A549 (cell line): ENCODE measurements at regions of chr3 and their contacts with region 1.

Region 1: DNA sequence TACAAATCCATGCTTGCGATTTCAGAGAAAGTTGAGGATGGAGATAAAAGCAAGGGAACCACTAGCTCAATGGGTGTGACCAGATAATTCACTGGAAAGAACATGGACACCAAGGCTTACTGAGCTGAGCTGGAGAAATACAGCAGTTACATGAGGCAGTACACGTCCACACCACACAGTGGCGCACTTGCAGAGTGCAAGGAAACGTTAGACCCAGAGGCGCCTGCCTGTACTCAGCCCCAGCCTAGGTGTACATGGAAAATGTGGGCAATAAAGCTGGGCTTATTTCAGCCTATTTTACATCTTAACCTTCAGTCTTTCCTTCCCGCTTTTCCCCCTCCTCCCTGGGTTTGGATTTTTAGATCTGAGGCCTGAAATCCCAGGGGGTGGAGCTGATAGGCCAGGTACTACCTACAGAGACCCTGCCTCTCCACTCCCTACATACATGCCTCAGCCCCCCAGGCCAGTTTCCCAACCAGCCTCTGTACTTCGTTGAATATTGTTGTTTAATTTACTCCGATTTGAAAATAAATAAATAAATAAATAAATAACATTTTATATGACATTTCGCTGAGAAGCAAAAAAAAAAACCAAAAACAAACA is 60.1 kb downstream of the PCOLCE2 start:
- DNase-seq: peak; percentile 72 to 84
- ATAC-seq: peak; percentile 99 to 100
- H3K4me3 ChIP-seq: no peak overlapping the region
- H3K27ac ChIP-seq: 0 out of 6 replicates have a peak overlapping the region, but pooled peaks of 1 of the 2 experiments have one; percentile 47
- H3K4me1 ChIP-seq: 0 out of 3 replicates have a peak, but pooled peaks cover 3% of the 10 kb centered on the region
- CTCF ChIP-seq: peak; percentile 92
- EP300 ChIP-seq: no peak
- POLR2A ChIP-seq: no peak
- RAD21 ChIP-seq: peak; percentile 93 to 95

Region 2: DNA sequence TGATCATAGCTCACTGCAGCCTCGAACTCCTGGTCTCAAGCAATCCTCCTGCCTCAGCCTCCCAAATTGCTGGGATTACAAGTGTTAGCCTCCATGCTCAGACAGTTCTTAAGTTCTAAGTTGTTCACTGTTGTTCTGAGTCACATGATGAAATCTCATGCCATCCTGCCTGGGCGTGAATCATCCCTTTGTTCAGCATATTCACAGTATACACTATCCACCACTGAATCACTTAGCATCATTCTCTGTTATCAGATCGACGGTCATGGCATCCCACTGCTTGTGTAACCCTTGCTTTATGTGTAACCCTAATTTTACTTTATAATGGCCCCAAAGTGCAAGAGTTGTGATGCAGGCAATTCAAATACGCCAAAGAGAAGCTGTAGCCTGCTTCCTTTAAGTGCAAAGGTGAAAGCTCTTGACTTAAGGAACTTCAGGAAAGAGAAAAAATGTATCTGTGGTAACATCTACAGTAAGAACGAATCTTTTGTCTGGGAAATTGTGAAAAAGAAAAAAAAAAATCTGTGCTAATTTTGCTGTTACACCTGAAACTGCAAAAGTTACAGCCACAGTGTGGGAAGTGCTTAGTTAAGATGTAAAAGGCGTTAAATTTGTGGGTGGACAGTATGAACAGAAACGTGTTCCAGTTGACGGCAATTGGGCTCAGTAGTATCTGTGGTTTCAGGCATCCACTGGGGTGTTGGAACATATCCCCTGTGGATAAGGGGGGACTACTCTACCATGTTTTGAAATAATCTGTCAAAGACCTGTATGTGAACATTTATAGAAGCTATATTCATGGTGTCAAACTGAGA is 20.5 kb before region 1 on chr3:
- CTCF ChIA-PET with region 1: interaction called, 40 read pairs
- POLR2A ChIA-PET with region 1: no interaction called
- DNase-seq: peak; percentile 32 to 68
- ATAC-seq: peak; percentile 93 to 98
- H3K4me3 ChIP-seq: no peak overlapping the region
- H3K27ac ChIP-seq: peak overlapping the region; percentile 58 to 81; a peak in 5 of 6 replicates
- H3K4me1 ChIP-seq: peaks cover 13% of the 10 kb centered on the region; the same call in 2 of the 3 replicates
- CTCF ChIP-seq: no peak
- EP300 ChIP-seq: peak in 1 of 2 experiments; percentile 36; a peak in 1 of 5 replicates
- POLR2A ChIP-seq: no peak
- RAD21 ChIP-seq: no peak

Region 3: DNA sequence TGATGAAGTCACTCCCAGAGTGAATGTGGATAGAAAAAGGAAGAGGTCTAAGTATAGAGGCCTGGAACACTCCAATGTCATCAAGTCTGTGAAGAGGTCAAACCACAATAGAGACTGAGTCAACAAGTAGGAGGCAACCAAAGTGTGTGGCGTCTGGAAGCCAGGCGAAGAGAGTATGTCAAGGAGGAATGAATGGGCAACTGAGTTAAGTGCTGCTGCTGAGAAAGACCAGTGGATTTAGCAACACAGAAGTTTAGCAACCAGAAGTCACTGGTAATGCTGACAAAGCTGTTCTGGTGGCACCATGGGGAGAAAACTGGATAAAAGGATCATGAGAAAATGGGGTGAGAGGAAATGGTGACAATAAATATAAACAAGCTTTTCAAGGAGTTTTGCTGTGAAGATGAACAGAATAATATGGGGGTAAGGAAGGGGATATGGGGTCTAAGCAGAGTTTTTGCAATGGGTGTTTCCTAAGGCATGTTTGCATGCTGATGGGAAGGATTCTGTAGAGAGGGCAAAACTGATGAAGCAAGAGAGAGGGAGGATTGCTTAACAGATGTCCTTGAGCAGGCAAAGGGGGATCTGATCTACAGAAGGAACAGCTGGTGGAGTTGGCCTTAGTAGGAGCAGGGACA is 21.7 kb after region 1 on chr3:
- CTCF ChIA-PET with region 1: interaction called, 89 read pairs
- POLR2A ChIA-PET with region 1: no interaction called
- DNase-seq: peak; percentile 17 to 80
- ATAC-seq: peak; percentile 74 to 85
- H3K4me3 ChIP-seq: no peak overlapping the region
- H3K27ac ChIP-seq: peak overlapping the region; percentile 19 to 79; a peak in 4 of 6 replicates
- H3K4me1 ChIP-seq: peaks cover 47% of the 10 kb centered on the region
- CTCF ChIP-seq: no peak
- EP300 ChIP-seq: peak in 1 of 2 experiments; percentile 42; a peak in 1 of 5 replicates
- POLR2A ChIP-seq: no peak
- RAD21 ChIP-seq: no peak

Region 4: DNA sequence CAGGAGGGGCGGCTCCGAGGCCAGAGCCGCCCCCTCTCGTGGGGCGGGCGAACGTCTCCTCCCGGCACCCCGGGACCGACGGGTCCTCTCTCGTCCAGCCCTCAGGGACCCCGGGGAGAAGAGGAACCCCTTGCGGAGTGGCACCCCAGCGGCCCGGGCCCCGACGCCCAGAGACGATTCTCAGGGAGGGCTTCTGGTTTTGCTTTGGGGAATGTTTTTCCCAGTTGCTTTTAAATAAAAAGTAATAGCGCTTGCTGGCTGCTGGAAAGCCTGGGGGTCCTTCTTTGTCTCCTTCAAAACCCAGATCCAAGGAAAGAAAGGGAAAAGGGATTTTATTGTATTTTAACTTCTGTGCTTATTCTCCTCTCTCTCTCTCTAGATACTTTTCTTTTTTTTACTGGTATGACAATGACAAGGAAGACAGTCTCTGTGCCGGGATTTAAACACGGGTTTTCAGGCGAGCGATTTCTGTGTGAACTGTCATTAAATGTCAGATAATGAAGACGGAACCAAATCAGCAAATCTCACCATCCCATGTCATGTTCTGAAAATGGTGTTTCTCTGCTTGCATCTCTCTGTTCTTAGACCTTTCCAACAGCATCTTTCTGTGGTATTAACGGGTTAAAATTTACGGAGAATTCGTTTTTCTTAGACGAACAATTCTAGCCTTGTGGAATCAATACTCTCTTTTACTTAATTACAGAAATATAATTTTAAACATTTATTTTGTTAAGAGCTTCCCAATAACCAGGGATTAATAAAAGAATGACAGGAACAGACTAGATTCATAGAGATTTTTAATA is 60.6 kb after region 1 on chr3:
- CTCF ChIA-PET with region 1: interaction called, 26 read pairs
- POLR2A ChIA-PET with region 1: interaction called, 8 read pairs
- DNase-seq: no peak
- ATAC-seq: no peak
- H3K4me3 ChIP-seq: peak overlapping the region; percentile 75
- H3K27ac ChIP-seq: peak overlapping the region; percentile 83 to 89
- H3K4me1 ChIP-seq: peaks cover 15% of the 10 kb centered on the region
- CTCF ChIP-seq: no peak
- EP300 ChIP-seq: no peak
- POLR2A ChIP-seq: no peak
- RAD21 ChIP-seq: no peak

Region 5: DNA sequence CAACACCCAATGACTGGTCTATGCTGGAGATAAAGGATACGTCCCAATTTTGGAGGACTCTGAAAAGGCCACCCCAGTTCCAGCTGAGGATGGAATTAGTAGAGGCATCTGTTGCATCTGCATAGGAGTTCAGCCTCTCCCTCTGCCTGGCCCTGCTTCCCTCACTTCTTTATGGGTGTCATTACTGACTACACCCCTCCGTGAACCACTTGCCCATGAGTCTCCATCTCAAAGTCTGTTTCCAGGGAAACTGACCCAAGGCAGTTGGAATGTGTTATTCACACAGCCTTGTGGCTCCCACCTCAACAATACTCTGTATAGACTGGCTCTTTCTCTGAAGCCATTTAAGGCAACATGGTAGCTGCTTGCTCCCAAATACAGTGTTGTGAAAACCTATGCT is 81.5 kb after region 1 on chr3:
- CTCF ChIA-PET with region 1: interaction called, 31 read pairs
- POLR2A ChIA-PET with region 1: no interaction called
- DNase-seq: no peak
- ATAC-seq: no peak
- H3K4me3 ChIP-seq: no peak overlapping the region
- H3K27ac ChIP-seq: no peak overlapping the region
- H3K4me1 ChIP-seq: peaks cover under 1% of the 10 kb centered on the region; the same call in 1 of the 3 replicates
- CTCF ChIP-seq: no peak
- EP300 ChIP-seq: no peak
- POLR2A ChIP-seq: no peak
- RAD21 ChIP-seq: no peak

Region 6: GRCh38 chr3:142965581-142965980 is 136.8 kb after region 1 on chr3:
- CTCF ChIA-PET with region 1: interaction called, 12 read pairs
- POLR2A ChIA-PET with region 1: interaction called, 3 read pairs
- DNase-seq: no peak
- ATAC-seq: no peak
- H3K4me3 ChIP-seq: no peak overlapping the region
- H3K27ac ChIP-seq: no peak overlapping the region
- H3K4me1 ChIP-seq: peaks cover 22% of the 10 kb centered on the region
- CTCF ChIP-seq: no peak
- EP300 ChIP-seq: no peak
- POLR2A ChIP-seq: no peak
- RAD21 ChIP-seq: no peak

Region 7: GRCh38 chr3:143001369-143002082 is 172.7 kb after region 1 on chr3 and contains the start of gene U2SURP:
- CTCF ChIA-PET with region 1: interaction called, 264 read pairs
- POLR2A ChIA-PET with region 1: interaction called, 6 read pairs
- DNase-seq: peak; percentile 93 to 98
- ATAC-seq: peak; percentile 89 to 92
- H3K4me3 ChIP-seq: peak within 1 kb of the TSS; percentile 93
- H3K27ac ChIP-seq: peak within 1 kb of the TSS; percentile 91 to 96
- H3K4me1 ChIP-seq: peaks cover 44% of the 10 kb centered on the region
- CTCF ChIP-seq: no peak
- EP300 ChIP-seq: no peak; a peak in 1 of 5 replicates
- POLR2A ChIP-seq: peak; percentile 85
- RAD21 ChIP-seq: no peak
- polyA plus RNA-seq, gene U2SURP: 109 and 166 TPM in 2 replicates